ENCODE measurements at regions of chr2 and their contacts with region 1.

Region 1: GRCh38 chr2:175684457-175684856 is 317.6 kb downstream of the LNPK start:
- DNase-seq: no peak
- H3K4me3 ChIP-seq: no peak overlapping the region
- H3K27ac ChIP-seq: no peak overlapping the region
- H3K4me1 ChIP-seq: no peaks in the 10 kb centered on the region
- H3K27me3 ChIP-seq: peaks cover 34% of the 10 kb centered on the region
- CTCF ChIP-seq: no peak
- EP300 ChIP-seq: no peak
- POLR2A ChIP-seq: no peak

Region 2: DNA sequence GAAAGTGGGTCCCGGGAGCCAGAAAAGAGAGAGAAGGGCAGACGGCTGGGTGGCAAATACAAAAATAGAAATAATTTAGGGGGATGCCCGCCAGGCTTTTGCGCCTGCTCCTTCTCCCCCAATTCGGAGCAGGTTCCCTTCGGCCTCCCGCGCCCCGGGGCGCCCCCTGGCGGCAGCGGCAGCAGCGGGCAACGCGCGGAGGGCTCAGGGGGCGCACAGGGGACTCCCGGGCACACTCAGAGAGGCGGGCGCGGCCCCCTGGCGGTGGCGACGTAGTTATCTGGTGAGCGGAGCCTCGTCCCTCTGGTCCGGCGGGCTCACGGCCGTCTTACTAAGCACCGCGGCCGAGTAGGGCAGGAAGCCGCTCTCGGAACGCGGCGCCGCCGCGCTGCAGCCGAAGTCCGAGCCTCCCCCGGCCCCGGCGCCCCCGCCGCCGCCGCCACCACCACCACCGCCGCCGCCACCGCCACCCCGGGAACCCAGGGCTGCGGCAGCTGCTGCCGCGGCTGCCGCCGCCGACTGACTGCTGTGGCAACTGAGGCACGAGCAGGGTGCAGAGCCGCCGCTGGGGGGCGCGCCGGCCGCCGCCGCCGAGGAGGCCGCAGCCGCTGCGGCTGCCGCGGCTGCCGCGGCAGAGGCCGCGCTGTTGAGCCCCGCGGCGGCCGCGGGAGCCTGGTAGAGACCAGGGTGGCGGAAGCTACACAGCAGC is 395.5 kb after region 1 on chr2:
- in situ Hi-C with region 1: loop called in 3 of 4 experiments (anchors 10 to 25 kb)
- intact Hi-C with region 1: loop called (anchors 5 kb)
- DNase-seq: no peak
- H3K4me3 ChIP-seq: peak overlapping the region in 3 of 4 donors; percentile 13 to 48 (median 26)
- H3K27ac ChIP-seq: no peak overlapping the region
- H3K4me1 ChIP-seq: peaks cover 8 to 36% (median 26%) of the 10 kb centered on the region in 4 donors
- H3K27me3 ChIP-seq: peaks cover 99% of the 10 kb centered on the region
- CTCF ChIP-seq: peak; percentile 57 to 83 (median 69)
- EP300 ChIP-seq: no peak
- POLR2A ChIP-seq: no peak